Aorta (tissue), 5 donors: ENCODE measurements at regions of chr7 and their contacts with region 1.

Region 1: DNA sequence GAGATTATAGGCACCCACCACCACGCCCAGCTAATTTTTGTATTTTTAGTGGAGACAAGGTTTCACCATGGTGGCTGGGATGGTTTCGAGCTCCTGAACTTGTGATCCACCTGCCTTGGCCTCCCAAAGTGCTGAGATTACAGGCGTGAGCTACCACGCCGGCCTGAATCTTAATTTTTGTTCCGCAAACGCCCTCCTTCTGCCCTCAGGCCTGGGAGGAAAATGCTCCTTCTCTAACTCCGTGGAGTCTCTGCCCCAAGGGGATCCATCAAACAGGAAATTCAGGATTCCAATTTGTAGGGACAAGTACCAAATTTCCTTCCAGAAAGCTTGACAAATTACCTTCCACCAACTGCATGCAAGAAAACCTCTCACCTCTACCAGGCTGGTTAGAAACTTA is 43.2 kb downstream of the RBAK start:
- DNase-seq: peak in 1 of 2 donors; percentile 15
- ATAC-seq: no peak
- H3K4me3 ChIP-seq: no peak overlapping the region
- H3K27ac ChIP-seq: no peak overlapping the region
- H3K4me1 ChIP-seq: no peaks in the 10 kb centered on the region
- H3K27me3 ChIP-seq: no peaks in the 10 kb centered on the region

Region 2: DNA sequence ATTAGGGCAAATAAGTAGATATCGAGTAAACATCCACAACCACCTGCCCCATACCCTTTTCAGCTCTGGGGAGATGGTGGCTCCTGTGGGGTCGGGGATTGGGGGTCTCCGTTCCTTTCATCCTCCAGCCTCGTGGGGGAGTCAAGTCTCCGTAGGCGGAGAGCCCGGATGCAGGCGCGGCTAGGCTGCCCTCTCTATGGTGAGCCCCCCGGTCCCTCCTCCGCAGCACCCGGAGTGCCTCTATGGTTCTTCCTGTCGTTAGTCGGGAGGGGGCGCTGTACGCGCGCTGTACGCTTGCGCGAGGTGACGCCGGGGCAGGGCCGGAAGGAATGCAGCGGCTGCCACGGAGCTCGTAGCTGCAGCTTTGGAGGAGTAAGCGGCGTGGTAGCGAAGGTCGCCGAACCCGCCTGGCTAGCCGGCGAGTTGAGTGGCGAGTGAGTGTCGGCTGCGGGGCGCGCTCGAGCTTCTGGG is 115.1 kb before region 1 on chr7:
- intact Hi-C with region 1: loop called in 1 of 2 experiments (anchors 5 kb)
- DNase-seq: peak; percentile 92 to 97
- ATAC-seq: peak; percentile 96
- H3K4me3 ChIP-seq: peak overlapping the region; percentile 35 to 95
- H3K27ac ChIP-seq: peak overlapping the region in 1 of 2 donors; percentile 80
- H3K4me1 ChIP-seq: peaks cover 0 to 4% of the 10 kb centered on the region in 2 donors
- H3K27me3 ChIP-seq: no peaks in the 10 kb centered on the region